ENCODE measurements at regions of chr2 and their contacts with region 1.

Region 1: GRCh38 chr2:174697255-174697654 is 67.0 kb downstream of the CHRNA1 start:
- DNase-seq: peak; percentile 80
- ATAC-seq: peak; percentile 99
- H3K4me3 Mint-ChIP-seq: no peak overlapping the region
- H3K27ac Mint-ChIP-seq: no peak overlapping the region
- H3K4me1 Mint-ChIP-seq: no peaks in the 10 kb centered on the region
- H3K27me3 Mint-ChIP-seq: peaks cover 3% of the 10 kb centered on the region

Region 2: DNA sequence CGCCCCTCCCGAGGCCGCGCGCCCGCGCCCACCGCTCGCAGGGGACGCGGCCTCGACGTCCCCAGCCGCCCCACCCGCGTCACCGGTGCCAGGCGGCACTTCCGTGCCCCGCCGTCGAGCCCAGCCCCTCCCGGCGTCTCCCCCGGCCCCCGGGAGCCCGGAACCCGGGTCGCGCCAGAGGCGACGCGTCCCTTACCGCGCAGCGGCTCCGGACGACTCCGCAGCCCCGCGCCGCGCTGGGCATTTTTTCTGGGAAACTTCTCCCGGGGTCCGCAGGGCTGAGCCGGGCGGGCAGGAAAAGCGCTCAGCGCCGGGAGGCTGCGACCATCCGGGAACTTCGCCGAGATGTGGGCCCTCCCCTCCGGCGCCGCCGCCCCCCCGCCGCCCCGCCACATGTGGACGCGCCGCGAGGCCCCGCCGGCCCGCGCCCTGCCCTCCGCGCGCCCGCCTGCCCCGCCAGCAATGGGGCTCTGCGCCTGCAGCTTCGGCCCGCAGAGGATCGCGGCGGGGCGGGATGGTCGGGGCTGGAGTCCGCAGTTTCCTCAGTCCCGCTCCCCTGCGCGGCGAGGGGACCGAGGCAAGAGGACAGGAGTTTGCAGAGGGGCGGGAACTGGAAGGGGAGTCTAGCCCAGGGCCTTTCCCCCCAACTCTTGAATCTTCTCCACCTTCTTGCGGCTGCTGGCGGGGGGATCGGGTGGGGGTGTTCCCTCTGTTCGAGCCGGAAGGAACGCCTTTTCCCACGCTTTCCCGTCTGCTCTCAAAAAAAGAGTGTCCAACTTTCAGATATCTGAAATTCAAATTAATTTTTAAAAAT is 14.5 kb before region 1 on chr2:
- CTCF ChIA-PET with region 1: interaction called, 135 read pairs
- POLR2A ChIA-PET with region 1: interaction called, 5 read pairs
- intact Hi-C with region 1: no loop called
- DNase-seq: peak; percentile 66
- ATAC-seq: peak; percentile 66
- H3K4me3 Mint-ChIP-seq: peak overlapping the region; percentile 82
- H3K27ac Mint-ChIP-seq: peak overlapping the region; percentile 90
- H3K4me1 Mint-ChIP-seq: peaks cover 48% of the 10 kb centered on the region
- H3K27me3 Mint-ChIP-seq: no peaks in the 10 kb centered on the region

Region 3: DNA sequence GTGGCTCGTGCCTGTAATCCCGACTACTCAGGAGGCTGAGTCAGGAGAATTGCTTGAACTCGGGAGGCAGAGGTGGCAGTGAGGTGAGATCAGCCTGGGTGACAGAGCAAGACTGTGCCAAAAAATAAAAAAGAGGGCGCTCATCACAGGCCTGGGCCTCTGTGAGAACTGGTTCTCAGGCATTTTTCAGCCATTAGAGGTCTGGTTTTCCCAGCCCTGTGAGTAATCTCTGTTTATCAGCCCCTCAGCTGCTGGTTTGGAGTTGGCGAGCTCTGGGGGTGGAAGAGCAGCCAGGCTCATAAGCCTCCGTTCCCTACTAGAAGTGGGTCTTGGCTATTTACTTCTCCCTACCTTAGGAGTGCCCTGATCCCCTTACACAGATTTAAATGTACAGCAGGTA is 14.0 kb after region 1 on chr2:
- CTCF ChIA-PET with region 1: interaction called, 16 read pairs
- POLR2A ChIA-PET with region 1: no interaction called
- intact Hi-C with region 1: no loop called
- DNase-seq: no peak
- ATAC-seq: no peak
- H3K4me3 Mint-ChIP-seq: no peak overlapping the region
- H3K27ac Mint-ChIP-seq: no peak overlapping the region
- H3K4me1 Mint-ChIP-seq: peaks cover under 1% of the 10 kb centered on the region
- H3K27me3 Mint-ChIP-seq: peaks cover 5% of the 10 kb centered on the region

Region 4: GRCh38 chr2:174722942-174723592 is 25.8 kb after region 1 on chr2:
- CTCF ChIA-PET with region 1: interaction called, 14 read pairs
- POLR2A ChIA-PET with region 1: no interaction called
- intact Hi-C with region 1: no loop called
- DNase-seq: no peak
- ATAC-seq: no peak
- H3K4me3 Mint-ChIP-seq: no peak overlapping the region
- H3K27ac Mint-ChIP-seq: no peak overlapping the region
- H3K4me1 Mint-ChIP-seq: peaks cover 14% of the 10 kb centered on the region
- H3K27me3 Mint-ChIP-seq: peaks cover 2% of the 10 kb centered on the region

Region 5: GRCh38 chr2:174846941-174847938 is 150.0 kb after region 1 on chr2:
- CTCF ChIA-PET with region 1: no interaction called
- POLR2A ChIA-PET with region 1: no interaction called
- intact Hi-C with region 1: no loop called
- DNase-seq: no peak
- ATAC-seq: peak; percentile 28
- H3K4me3 Mint-ChIP-seq: peak overlapping the region; percentile 42
- H3K27ac Mint-ChIP-seq: no peak overlapping the region
- H3K4me1 Mint-ChIP-seq: peaks cover 21% of the 10 kb centered on the region
- H3K27me3 Mint-ChIP-seq: no peaks in the 10 kb centered on the region

Region 6: DNA sequence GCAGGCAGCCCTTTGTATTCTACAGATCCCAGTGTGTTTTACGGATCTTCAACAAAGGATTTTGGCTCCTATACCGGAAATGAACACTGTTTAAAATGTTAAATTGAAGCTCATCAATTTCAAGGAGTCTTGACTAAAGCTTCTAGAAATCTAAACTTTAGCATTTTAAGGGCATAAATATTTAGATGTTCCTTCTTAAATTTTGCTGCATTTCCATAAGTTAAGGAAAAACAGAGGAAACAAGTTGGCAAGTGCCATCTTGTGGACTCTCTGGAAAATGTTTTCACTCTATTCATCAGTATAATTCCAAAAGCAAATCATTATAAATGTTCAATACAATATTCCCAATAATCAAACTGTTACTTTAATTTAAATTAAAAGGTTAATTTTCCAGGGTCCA is 288.4 kb after region 1 on chr2:
- CTCF ChIA-PET with region 1: interaction called, 11 read pairs
- POLR2A ChIA-PET with region 1: no interaction called
- intact Hi-C with region 1: loop called (anchors 1 to 5 kb)
- DNase-seq: no peak
- ATAC-seq: no peak
- H3K4me3 Mint-ChIP-seq: no peak overlapping the region
- H3K27ac Mint-ChIP-seq: no peak overlapping the region
- H3K4me1 Mint-ChIP-seq: no peaks in the 10 kb centered on the region
- H3K27me3 Mint-ChIP-seq: peaks cover 6% of the 10 kb centered on the region

Region 7: DNA sequence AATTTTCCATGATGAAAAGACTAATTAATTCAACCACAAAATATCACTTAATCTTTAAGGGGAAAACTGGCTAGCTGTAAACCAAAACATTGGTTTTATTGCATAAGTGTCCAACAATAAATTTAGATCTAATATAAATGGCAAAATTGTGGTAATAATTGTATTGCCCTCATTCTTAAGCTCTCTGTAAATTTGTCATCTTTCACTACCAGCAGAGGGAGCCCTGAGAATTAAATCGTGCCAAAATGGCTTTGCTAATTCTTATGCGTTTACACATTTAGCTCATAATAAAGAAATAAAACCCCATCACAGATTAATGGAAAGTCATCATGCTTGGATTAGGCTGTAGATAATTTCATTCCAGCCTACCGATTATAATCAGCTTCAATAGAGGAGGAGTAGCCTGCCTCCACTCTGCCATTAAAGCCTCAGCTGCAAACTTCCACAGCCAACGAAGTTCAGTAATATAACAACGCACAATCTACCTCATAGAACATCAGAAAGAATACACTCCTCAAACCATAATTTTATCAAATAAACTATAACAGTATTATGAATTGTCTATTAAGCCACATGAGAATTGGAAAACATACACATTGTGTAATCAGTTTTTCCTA is 554.3 kb after region 1 on chr2:
- CTCF ChIA-PET with region 1: interaction called, 10 read pairs
- POLR2A ChIA-PET with region 1: no interaction called
- intact Hi-C with region 1: no loop called
- DNase-seq: no peak
- ATAC-seq: no peak
- H3K4me3 Mint-ChIP-seq: no peak overlapping the region
- H3K27ac Mint-ChIP-seq: no peak overlapping the region
- H3K4me1 Mint-ChIP-seq: no peaks in the 10 kb centered on the region
- H3K27me3 Mint-ChIP-seq: peaks cover 22% of the 10 kb centered on the region

Region 8: GRCh38 chr2:175282290-175282689 is 585.0 kb after region 1 on chr2:
- CTCF ChIA-PET with region 1: no interaction called
- POLR2A ChIA-PET with region 1: no interaction called
- intact Hi-C with region 1: loop called in 1 of 2 experiments (anchors 5 kb)
- DNase-seq: no peak
- ATAC-seq: peak; percentile 91
- H3K4me3 Mint-ChIP-seq: no peak overlapping the region
- H3K27ac Mint-ChIP-seq: no peak overlapping the region
- H3K4me1 Mint-ChIP-seq: peaks cover 4% of the 10 kb centered on the region
- H3K27me3 Mint-ChIP-seq: peaks cover 2% of the 10 kb centered on the region

Measured in activated CD4-positive, alpha-beta T cell treated with anti-CD3 and anti-CD28 coated beads for 36 hours (primary cell).